ENCODE measurements at regions of chr18 and their contacts with region 1.

Region 1: DNA sequence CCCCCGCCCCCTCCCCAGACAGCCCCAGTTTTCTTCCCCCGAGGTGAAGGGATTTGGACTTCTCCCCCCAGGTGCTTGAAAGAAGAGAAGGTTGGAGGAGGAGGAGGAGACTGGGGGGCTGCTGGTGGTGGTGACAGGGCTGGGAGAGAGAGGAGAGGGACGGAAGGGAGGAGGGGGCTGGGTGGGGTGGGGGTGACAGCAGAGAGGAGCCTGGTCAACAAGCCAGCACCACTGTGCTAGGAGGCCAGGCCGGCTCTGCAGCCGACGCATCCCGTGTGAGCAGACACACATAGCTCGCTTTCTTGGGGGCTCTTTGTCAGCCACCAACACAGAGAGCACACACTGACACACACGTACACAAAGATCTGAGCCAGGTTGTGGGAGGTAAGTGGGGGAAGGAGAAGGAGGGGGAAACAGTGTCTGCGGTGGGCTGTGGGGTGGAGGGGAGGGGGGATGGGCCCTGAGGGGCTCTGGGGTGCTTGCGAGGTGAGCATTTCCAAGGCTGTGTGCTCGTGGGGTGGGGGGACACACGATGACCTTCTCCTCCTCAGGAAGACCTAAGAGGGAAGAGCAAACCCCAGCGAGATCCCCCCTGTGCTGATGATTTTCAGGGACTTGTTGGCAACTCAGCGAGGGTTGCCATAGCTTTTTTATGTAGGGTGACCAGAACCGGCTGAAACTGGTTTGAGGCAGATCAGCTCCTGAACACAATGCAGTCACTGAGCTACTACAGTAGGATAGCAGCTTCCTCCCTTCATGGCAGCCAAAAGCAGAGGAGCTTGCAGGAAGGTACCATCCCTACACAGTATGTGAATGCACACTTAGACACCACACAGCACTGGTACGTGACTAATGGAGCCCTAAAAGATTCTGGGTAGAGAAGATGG is at the start of gene ZNF532:
- DNase-seq: peak; percentile 82
- ATAC-seq: peak; percentile 50
- H3K4me3 ChIP-seq: peak within 1 kb of the TSS; percentile 39
- H3K27ac ChIP-seq: peak within 1 kb of the TSS; percentile 98
- H3K4me1 ChIP-seq: peaks cover 34% of the 10 kb centered on the region
- H3K27me3 ChIP-seq: no peaks in the 10 kb centered on the region
- CTCF ChIP-seq: no peak
- POLR2A ChIP-seq: peak; percentile 28; the same call in 1 of the 2 replicates
- RAD21 ChIP-seq: no peak; the same call in 1 of the 2 replicates
- total RNA-seq, gene ZNF532: 29.9 and 30.0 TPM in 2 replicates

Region 2: DNA sequence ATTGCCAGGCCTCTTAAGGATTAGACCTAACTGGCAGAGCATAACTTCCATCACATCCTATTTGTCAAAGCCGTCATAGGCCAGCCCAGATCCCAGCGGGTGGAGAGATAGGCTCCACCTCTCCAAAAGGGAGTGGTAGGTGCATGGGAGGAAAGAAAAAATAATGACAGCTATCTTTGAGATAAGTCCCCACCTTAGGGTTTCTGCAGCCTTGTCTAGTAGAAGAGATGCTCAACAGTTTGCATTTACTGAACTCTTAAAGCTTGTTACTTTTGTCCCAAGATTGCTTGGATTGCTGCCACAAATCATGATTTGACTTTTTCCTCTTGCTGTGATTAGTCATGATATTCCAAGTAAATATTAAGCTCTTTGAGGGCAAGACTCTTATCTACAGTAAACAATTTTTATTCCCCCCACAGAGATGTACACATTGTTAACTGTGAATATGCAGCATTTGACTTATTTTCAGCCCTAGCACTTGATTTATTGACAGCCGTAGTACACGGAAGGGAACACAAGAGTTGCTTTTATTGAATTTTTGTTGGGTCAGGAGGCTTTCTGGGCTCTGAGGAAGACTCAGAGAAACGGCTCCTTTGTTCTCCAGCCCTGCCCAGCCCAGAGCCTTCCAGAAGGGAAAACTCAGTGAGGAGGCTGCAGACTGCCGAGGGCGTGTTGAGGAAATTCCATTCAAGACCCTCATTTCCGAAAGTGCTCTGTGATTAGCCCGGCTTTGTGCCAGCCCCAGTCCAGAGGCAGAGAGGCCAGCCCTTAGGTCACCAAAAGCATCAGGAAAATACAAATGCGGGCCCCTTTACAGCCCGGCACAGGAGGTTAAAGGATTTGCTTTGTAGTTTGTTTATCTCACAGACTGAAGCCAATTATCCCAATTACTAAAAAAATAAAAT is 75.2 kb before region 1 on chr18:
- CTCF ChIA-PET with region 1: interaction called, 3 read pairs
- POLR2A ChIA-PET with region 1: no interaction called
- dilution Hi-C with region 1: no loop called
- in situ Hi-C with region 1: no loop called
- intact Hi-C with region 1: loop called (anchors 2 kb)
- DNase-seq: peak; percentile 84
- ATAC-seq: peak; percentile 45
- H3K4me3 ChIP-seq: no peak overlapping the region
- H3K27ac ChIP-seq: peak overlapping the region; percentile 95
- H3K4me1 ChIP-seq: peaks cover 24% of the 10 kb centered on the region
- H3K27me3 ChIP-seq: no peaks in the 10 kb centered on the region
- CTCF ChIP-seq: no peak
- POLR2A ChIP-seq: no peak
- RAD21 ChIP-seq: no peak

Region 3: GRCh38 chr18:58838946-58839345 is 25.4 kb before region 1 on chr18:
- CTCF ChIA-PET with region 1: no interaction called
- POLR2A ChIA-PET with region 1: interaction called, 30 read pairs
- dilution Hi-C with region 1: no loop called
- in situ Hi-C with region 1: no loop called
- intact Hi-C with region 1: no loop called
- DNase-seq: no peak
- ATAC-seq: no peak
- H3K4me3 ChIP-seq: no peak overlapping the region
- H3K27ac ChIP-seq: no peak overlapping the region
- H3K4me1 ChIP-seq: no peaks in the 10 kb centered on the region
- H3K27me3 ChIP-seq: no peaks in the 10 kb centered on the region
- CTCF ChIP-seq: no peak
- POLR2A ChIP-seq: no peak
- RAD21 ChIP-seq: no peak

Region 4: DNA sequence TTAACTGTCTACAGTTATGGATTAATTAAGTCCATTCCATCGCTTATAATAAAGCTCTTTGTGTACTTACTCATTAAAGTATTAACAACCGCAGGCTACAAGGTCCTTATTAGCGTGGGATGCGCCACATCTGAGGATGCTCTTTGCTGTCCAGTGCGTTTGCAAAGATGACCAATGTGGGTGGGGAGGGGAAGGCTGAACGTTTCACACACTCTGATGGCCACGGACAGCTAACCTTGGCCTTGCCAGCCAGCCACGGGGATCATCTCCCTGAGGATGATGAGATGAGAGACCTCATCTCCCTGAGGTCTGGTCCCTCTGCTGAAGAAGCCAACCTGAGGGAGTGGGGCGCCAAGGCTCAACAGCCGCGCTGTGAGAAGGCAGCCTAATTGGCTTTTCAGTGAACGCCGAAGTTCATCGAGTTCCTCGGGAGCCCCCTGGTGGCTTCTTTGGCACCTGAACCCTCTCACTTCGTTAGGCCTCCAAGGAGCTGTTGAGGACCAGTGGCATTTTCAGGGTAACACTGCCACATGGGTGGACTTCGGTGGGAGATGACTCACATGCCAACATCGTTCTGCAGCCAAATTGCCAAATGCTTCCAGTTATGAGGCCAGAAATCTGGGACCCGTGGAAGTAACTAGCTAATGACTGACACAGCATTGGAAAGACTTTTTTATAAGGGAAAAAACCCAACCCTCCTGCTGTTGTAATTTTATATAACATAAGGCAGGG is 206.0 kb after region 1 on chr18:
- CTCF ChIA-PET with region 1: no interaction called
- POLR2A ChIA-PET with region 1: no interaction called
- dilution Hi-C with region 1: no loop called
- in situ Hi-C with region 1: no loop called
- intact Hi-C with region 1: loop called (anchors 5 kb)
- DNase-seq: peak; percentile 69
- ATAC-seq: peak; percentile 96
- H3K4me3 ChIP-seq: no peak overlapping the region
- H3K27ac ChIP-seq: no peak overlapping the region
- H3K4me1 ChIP-seq: no peaks in the 10 kb centered on the region
- H3K27me3 ChIP-seq: peaks cover 6% of the 10 kb centered on the region
- CTCF ChIP-seq: peak; percentile 87
- POLR2A ChIP-seq: no peak
- RAD21 ChIP-seq: peak; percentile 89

Measured in IMR-90 (cell line).